Calu3 (cell line): ENCODE measurements at regions of chr6 and their contacts with region 1.

Region 1: GRCh38 chr6:37309046-37309445 is 44.7 kb upstream of the RNF8 start:
- DNase-seq: no peak
- H3K4me3 Mint-ChIP-seq: no peak overlapping the region
- H3K27ac Mint-ChIP-seq: no peak overlapping the region
- H3K4me1 Mint-ChIP-seq: no peaks in the 10 kb centered on the region
- H3K27me3 Mint-ChIP-seq: no peaks in the 10 kb centered on the region
- CTCF ChIP-seq: no peak

Region 2: GRCh38 chr6:37038292-37039198 is 270.5 kb before region 1 on chr6:
- CTCF ChIA-PET with region 1: no interaction called
- intact Hi-C with region 1: no loop called
- DNase-seq: no peak
- H3K4me3 Mint-ChIP-seq: no peak overlapping the region
- H3K27ac Mint-ChIP-seq: peak overlapping the region; percentile 81
- H3K4me1 Mint-ChIP-seq: peaks cover 10% of the 10 kb centered on the region
- H3K27me3 Mint-ChIP-seq: no peaks in the 10 kb centered on the region
- CTCF ChIP-seq: no peak

Region 3: DNA sequence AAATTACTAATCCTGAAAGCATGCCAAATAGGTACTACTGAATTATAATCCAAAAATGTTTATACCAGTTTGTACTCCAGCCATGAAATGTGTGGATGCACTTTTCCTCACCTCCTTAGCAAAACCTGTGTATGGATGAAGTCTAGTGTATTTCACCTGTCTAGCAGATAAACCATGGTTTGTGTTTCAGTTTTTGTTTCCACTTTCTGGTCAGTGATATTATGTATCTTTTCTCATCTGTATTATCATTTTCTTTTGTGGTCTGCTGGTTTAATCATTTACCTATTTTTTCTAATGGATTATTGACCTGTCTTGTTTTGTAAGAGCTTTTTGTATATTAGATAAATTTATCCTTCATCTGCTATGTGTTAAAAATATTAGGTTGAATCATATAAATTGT is 10.1 kb before region 1 on chr6:
- CTCF ChIA-PET with region 1: interaction called, 10 read pairs
- intact Hi-C with region 1: no loop called
- DNase-seq: no peak
- H3K4me3 Mint-ChIP-seq: no peak overlapping the region
- H3K27ac Mint-ChIP-seq: no peak overlapping the region
- H3K4me1 Mint-ChIP-seq: no peaks in the 10 kb centered on the region
- H3K27me3 Mint-ChIP-seq: no peaks in the 10 kb centered on the region
- CTCF ChIP-seq: no peak

Region 4: DNA sequence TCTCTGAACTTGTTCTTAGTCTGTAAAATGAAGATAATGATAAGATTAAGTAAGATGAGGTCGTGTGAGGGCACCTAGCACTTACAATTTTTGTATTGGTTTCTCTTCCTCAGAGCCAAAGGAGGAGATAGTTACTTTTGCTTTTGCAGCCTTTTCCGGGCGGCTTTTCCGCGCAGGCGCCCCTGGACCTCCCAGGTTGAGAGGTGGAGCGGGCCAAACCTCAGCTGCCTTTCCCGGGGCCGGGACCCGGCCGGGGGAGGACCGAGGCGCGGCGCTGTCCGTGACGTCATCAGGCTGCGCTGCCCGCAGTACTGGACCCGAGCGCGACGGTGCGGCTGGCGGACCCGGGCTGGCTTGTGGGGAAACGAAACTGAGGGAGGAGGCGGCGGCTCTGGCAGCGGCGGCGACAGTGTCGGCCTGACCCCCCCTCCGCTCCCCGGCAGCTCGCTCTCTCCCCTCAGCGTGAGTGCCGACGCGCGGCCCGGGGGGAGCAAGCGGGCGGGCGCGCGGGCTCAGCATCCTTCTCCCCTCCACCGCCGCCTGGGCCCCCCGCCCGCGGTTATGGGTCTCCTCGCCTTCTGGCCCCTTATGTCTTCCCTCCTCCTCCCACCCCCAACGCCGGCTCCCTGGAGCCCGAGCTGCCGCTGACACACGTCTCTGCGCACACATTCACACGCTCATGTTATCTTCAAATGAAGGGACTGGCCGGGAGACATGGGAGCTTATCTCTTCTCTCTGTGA is 124.0 kb after region 1 on chr6 and contains the start of gene CMTR1:
- CTCF ChIA-PET with region 1: no interaction called
- intact Hi-C with region 1: no loop called
- DNase-seq: peak; percentile 98
- H3K4me3 Mint-ChIP-seq: peak within 1 kb of the TSS; percentile 87
- H3K27ac Mint-ChIP-seq: peak within 1 kb of the TSS; percentile 75
- H3K4me1 Mint-ChIP-seq: peaks cover 34% of the 10 kb centered on the region
- H3K27me3 Mint-ChIP-seq: peaks cover 7% of the 10 kb centered on the region
- CTCF ChIP-seq: no peak
- total RNA-seq, gene CMTR1: 50.3 and 62.5 TPM in 2 replicates